Panc1 (cell line): ENCODE measurements at regions of chr10 and their contacts with region 1.

Region 1: GRCh38 chr10:127715782-127716378 is 21.1 kb upstream of the FOXI2 start:
- DNase-seq: peak; percentile 2
- ATAC-seq: peak; percentile 56; the same call in 1 of the 2 replicates
- H3K4me3 ChIP-seq: no peak overlapping the region
- H3K27ac ChIP-seq: no peak overlapping the region
- H3K4me1 ChIP-seq: no peaks in the 10 kb centered on the region
- H3K27me3 ChIP-seq: peaks cover 13% of the 10 kb centered on the region
- CTCF ChIP-seq: peak; percentile 56; the same call in 1 of the 2 replicates

Region 2: GRCh38 chr10:127346604-127347003 is 369.3 kb before region 1 on chr10:
- CTCF ChIA-PET with region 1: no interaction called
- POLR2A ChIA-PET with region 1: no interaction called
- in situ Hi-C with region 1: no loop called
- intact Hi-C with region 1: no loop called
- DNase-seq: no peak
- ATAC-seq: no peak
- H3K4me3 ChIP-seq: no peak overlapping the region
- H3K27ac ChIP-seq: no peak overlapping the region
- H3K4me1 ChIP-seq: no peaks in the 10 kb centered on the region
- H3K27me3 ChIP-seq: no peaks in the 10 kb centered on the region
- CTCF ChIP-seq: no peak

Region 3: GRCh38 chr10:127813290-127813689 is 97.4 kb after region 1 on chr10:
- CTCF ChIA-PET with region 1: no interaction called
- POLR2A ChIA-PET with region 1: no interaction called
- in situ Hi-C with region 1: no loop called
- intact Hi-C with region 1: loop called (anchors 2 kb)
- DNase-seq: no peak
- ATAC-seq: peak; percentile 65
- H3K4me3 ChIP-seq: no peak overlapping the region
- H3K27ac ChIP-seq: no peak overlapping the region
- H3K4me1 ChIP-seq: no peaks in the 10 kb centered on the region
- H3K27me3 ChIP-seq: 0 out of 2 replicates have a peak, but pooled peaks cover 2% of the 10 kb centered on the region
- CTCF ChIP-seq: peak; percentile 66

Region 4: DNA sequence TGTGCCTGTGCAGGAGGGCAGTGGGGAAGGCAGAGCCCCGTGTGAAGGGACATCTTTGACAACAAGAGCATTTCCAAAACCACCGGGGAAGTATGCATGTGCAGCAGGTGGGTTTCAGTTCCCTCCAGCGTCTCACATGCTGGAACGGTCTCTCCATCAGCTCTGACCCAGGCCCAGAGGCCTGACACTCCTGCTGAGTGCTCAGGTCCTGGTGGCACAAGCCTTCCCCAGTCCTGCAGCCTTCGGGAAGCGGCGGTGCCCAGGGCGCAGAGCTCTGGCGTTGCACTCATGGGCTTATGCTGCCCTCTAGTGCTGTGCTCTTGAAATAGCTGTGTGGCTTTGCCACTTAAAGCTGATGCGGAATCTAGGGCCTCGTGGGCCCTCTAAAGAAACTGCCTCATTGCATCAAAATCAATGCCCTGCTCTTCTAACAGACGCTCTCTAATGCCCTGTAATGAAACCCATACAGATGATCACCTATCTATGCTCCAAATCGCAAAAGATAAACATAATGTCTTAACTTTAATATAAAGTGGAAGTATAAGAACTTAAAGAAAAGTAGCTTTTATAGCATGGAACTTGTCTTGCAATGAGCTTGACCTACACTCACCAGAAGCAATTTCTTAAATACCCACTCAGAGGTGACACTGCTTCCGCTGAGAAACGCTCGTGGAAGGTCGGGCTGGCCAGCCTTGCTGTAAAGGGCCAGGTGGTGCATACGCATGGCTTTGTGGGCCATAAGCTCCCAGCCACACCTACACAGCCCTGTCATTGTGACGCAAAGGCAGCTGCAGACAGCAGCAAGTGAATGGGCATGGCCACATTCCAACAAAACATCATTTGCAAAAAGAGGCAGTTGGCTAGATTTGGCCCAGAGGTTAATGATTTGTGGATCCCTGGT is 138.2 kb after region 1 on chr10:
- CTCF ChIA-PET with region 1: interaction called, 32 read pairs
- POLR2A ChIA-PET with region 1: no interaction called
- in situ Hi-C with region 1: no loop called
- intact Hi-C with region 1: loop called (anchors 1 kb)
- DNase-seq: peak; percentile 45
- ATAC-seq: peak; percentile 97
- H3K4me3 ChIP-seq: no peak overlapping the region
- H3K27ac ChIP-seq: no peak overlapping the region
- H3K4me1 ChIP-seq: 0 out of 2 replicates have a peak, but pooled peaks cover 2% of the 10 kb centered on the region
- H3K27me3 ChIP-seq: peaks cover 5% of the 10 kb centered on the region; the same call in 1 of the 2 replicates
- CTCF ChIP-seq: peak; percentile 95

Region 5: GRCh38 chr10:128011175-128011979 is 295.5 kb after region 1 on chr10:
- CTCF ChIA-PET with region 1: no interaction called
- POLR2A ChIA-PET with region 1: no interaction called
- in situ Hi-C with region 1: no loop called
- intact Hi-C with region 1: loop called (anchors 5 kb)
- DNase-seq: peak; percentile 58
- ATAC-seq: peak; percentile 89
- H3K4me3 ChIP-seq: no peak overlapping the region
- H3K27ac ChIP-seq: no peak overlapping the region
- H3K4me1 ChIP-seq: peaks cover 4% of the 10 kb centered on the region; the same call in 1 of the 2 replicates
- H3K27me3 ChIP-seq: peaks cover 5% of the 10 kb centered on the region; the same call in 1 of the 2 replicates
- CTCF ChIP-seq: peak; percentile 99

Region 6: GRCh38 chr10:128069351-128070051 is 353.6 kb after region 1 on chr10:
- CTCF ChIA-PET with region 1: interaction called, 3 read pairs
- POLR2A ChIA-PET with region 1: no interaction called
- in situ Hi-C with region 1: no loop called
- intact Hi-C with region 1: loop called (anchors 5 kb)
- DNase-seq: peak; percentile 27
- ATAC-seq: peak; percentile 93
- H3K4me3 ChIP-seq: no peak overlapping the region
- H3K27ac ChIP-seq: no peak overlapping the region
- H3K4me1 ChIP-seq: peaks cover 4% of the 10 kb centered on the region; the same call in 1 of the 2 replicates
- H3K27me3 ChIP-seq: no peaks in the 10 kb centered on the region
- CTCF ChIP-seq: peak; percentile 91